ENCODE measurements at regions of chr12 and their contacts with region 1.

Region 1: DNA sequence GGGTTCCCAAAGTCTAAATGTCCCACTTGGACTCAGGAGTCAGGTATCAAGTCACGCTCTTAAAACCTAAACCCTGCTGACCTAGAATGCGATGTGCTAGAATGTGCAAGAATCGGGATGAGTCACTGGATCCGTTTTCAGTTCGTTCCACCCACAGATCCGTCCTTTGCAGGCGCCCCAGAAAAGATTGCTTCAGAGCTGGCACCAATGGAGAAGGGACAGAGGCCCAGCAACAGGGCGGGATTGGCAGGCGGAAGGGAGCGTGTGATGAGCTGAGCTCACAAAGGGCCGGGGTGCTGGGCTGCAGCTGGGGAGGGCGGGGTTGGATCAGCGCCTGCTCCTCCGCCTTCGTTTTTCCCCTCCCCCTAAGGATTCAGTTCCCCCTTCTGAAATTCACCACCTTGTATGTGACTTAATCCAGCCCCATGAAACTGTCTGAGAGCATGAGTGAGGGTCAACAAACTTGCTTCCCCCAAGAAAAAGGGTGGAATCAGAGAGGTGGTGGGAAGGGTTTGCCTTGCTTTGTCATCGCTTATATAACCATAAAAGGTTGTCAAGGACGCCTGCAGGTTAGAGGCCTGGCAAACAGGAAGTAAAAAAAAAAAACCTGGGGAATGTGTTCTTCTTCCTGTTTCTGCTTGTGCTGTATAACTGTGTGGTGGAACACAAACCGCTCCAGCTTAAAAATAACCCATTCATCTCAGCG is 2.8 kb upstream of the UBC start:
- DNase-seq: peak; percentile 100
- ATAC-seq: peak; percentile 72
- H3K4me3 ChIP-seq: peak overlapping the region; percentile 94
- H3K27ac ChIP-seq: peak overlapping the region; percentile 98
- H3K4me1 ChIP-seq: peaks cover 53% of the 10 kb centered on the region
- H3K27me3 ChIP-seq: no peaks in the 10 kb centered on the region
- CTCF ChIP-seq: no peak

Region 2: DNA sequence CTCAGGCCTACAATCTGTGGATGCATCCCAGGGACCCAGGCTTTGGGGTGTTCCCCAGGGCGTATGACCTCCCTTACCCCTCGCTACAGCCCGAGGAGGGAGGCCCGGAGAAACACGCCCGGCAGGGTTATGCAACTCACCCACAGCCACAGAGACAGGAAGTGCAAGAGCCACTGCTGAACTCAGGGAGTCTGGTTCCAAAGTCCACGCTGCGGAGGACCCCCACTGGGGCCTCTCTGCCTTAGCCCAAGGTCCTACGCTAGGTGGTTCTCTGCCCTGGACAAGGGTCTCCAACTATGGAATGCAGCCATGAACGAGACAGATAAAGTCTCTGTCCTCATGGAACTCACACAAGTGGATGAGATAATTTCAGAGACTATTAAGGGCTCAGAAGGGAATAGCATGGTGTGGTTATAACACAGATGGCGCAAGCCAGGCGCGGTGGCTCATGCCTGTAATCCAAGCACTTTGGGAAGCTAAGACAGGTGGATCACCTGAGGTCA is 64.9 kb before region 1 on chr12:
- CTCF ChIA-PET with region 1: no interaction called
- POLR2A ChIA-PET with region 1: no interaction called
- intact Hi-C with region 1: no loop called
- DNase-seq: no peak
- ATAC-seq: no peak
- H3K4me3 ChIP-seq: no peak overlapping the region
- H3K27ac ChIP-seq: no peak overlapping the region
- H3K4me1 ChIP-seq: no peaks in the 10 kb centered on the region
- H3K27me3 ChIP-seq: no peaks in the 10 kb centered on the region
- CTCF ChIP-seq: no peak

Region 3: GRCh38 chr12:124940549-124941527 is 23.6 kb after region 1 on chr12:
- CTCF ChIA-PET with region 1: interaction called, 21 read pairs
- POLR2A ChIA-PET with region 1: interaction called, 10 read pairs
- intact Hi-C with region 1: loop called (anchors 1 kb)
- DNase-seq: peak; percentile 97
- ATAC-seq: peak; percentile 54
- H3K4me3 ChIP-seq: peak overlapping the region; percentile 71
- H3K27ac ChIP-seq: peak overlapping the region; percentile 61
- H3K4me1 ChIP-seq: peaks cover 24% of the 10 kb centered on the region
- H3K27me3 ChIP-seq: no peaks in the 10 kb centered on the region
- CTCF ChIP-seq: peak; percentile 95

Region 4: DNA sequence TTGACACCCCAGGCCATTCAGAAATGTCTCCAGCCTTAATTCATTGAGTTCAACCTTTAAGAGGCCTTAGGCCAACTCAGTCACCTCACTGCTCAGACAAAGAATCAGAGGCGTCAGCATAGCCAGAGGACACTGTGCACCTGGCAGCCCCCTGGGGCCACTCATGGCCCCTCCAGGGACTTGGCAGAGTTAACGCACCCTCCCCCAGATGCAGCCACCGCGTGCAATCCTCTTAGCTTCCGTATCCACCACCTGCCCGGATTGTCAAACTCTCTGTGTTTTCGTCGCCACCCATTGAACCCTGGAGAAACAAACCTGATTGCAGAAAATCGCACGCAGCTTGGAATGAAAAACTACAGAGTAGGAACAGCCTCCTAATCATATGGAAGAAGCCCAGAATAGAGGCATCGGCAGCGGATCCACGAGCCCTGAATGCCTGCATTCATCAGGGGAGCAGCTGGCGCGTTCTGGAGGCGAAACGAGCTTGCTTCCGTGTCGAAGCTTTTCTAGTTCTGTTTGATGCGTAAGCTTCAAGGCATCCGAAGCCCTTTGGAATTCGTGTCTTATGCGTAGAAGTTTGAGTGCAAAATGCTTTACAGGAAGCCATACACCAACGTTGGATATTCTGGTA is 98.5 kb after region 1 on chr12:
- CTCF ChIA-PET with region 1: no interaction called
- POLR2A ChIA-PET with region 1: no interaction called
- intact Hi-C with region 1: no loop called
- DNase-seq: no peak
- ATAC-seq: no peak
- H3K4me3 ChIP-seq: no peak overlapping the region
- H3K27ac ChIP-seq: no peak overlapping the region
- H3K4me1 ChIP-seq: no peaks in the 10 kb centered on the region
- H3K27me3 ChIP-seq: no peaks in the 10 kb centered on the region
- CTCF ChIP-seq: no peak

Region 5: GRCh38 chr12:125079648-125080645 is 162.7 kb after region 1 on chr12:
- CTCF ChIA-PET with region 1: no interaction called
- POLR2A ChIA-PET with region 1: interaction called, 12 read pairs
- intact Hi-C with region 1: no loop called
- DNase-seq: no peak
- ATAC-seq: no peak
- H3K4me3 ChIP-seq: no peak overlapping the region
- H3K27ac ChIP-seq: no peak overlapping the region
- H3K4me1 ChIP-seq: no peaks in the 10 kb centered on the region
- H3K27me3 ChIP-seq: no peaks in the 10 kb centered on the region
- CTCF ChIP-seq: no peak

Region 6: DNA sequence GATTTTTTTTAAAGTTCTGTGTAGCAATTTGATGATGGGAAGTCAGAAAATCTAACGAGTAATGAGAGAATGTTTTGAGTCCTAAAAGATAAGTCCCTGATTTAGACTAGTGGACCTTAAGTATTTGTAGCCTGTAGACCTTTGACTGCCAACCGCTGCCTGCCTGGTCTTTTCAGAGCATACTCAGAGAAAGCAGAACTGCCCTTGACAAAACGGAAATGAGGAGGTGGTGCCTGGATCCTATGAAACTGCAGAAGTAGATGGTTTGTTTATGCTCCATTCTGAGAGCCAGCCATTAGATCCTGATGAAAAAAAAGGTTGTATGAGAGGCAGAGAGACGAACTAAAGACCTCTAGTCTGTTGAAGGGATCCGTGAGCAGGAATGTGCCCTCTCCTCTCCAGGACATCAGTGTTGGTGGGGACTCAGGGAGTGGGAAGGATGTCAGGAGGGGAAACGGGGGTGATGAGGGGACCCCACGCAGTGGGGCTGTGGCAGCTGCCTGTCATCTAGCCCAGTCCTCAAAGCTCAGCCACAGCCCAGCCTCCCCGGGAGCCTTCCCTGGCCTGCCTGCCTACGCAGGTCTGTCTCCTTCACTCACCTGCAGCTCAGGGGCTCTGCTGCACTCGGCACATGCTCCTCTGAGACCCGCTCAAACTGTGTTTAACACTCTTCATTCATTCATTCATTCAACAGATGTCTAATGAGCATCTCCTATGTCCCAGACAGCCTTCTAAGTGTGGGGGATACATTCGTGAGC is 595.4 kb after region 1 on chr12:
- CTCF ChIA-PET with region 1: no interaction called
- POLR2A ChIA-PET with region 1: no interaction called
- intact Hi-C with region 1: no loop called
- DNase-seq: no peak
- ATAC-seq: no peak
- H3K4me3 ChIP-seq: no peak overlapping the region
- H3K27ac ChIP-seq: no peak overlapping the region
- H3K4me1 ChIP-seq: no peaks in the 10 kb centered on the region
- H3K27me3 ChIP-seq: peaks cover 72% of the 10 kb centered on the region
- CTCF ChIP-seq: no peak

Measured in PC-3 (cell line).